Panc1 (cell line): ENCODE measurements at regions of chr5 and their contacts with region 1.

Region 1: DNA sequence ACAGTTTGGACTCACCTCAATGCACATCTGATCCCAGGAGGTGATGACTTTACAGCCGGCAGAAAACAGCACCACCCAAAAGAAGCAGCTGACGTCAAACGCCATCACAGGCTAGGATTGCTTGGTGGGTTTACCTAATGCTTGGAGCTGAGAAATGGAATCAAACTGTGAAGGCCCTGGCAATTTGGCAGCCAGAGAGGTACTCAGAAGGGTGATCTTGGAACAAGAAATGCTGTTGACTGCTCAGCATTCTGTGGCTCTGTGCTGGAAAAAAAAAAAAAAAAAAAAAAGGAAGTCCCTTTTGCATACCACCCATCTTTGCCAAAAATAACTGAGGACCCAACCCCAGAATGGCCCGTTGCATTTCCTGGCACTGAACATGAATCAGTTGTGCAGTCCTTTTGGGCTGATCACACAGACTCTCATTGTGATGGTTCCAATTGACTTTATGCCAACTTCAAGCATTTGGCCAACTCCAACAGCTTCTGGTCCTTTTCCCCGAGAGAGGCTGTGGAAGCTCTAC is at the start of gene CD180:
- DNase-seq: no peak
- ATAC-seq: no peak
- H3K4me3 ChIP-seq: no peak within 1 kb of the TSS
- H3K27ac ChIP-seq: no peak within 1 kb of the TSS
- H3K4me1 ChIP-seq: no peaks in the 10 kb centered on the region
- H3K27me3 ChIP-seq: no peaks in the 10 kb centered on the region
- CTCF ChIP-seq: no peak
- total RNA-seq, gene CD180: not detected

Region 2: GRCh38 chr5:67287510-67288268 is 91.1 kb after region 1 on chr5:
- CTCF ChIA-PET with region 1: no interaction called
- POLR2A ChIA-PET with region 1: no interaction called
- in situ Hi-C with region 1: no loop called
- intact Hi-C with region 1: no loop called
- DNase-seq: no peak
- ATAC-seq: no peak
- H3K4me3 ChIP-seq: no peak overlapping the region
- H3K27ac ChIP-seq: no peak overlapping the region
- H3K4me1 ChIP-seq: no peaks in the 10 kb centered on the region
- H3K27me3 ChIP-seq: no peaks in the 10 kb centered on the region
- CTCF ChIP-seq: no peak

Region 3: GRCh38 chr5:69074664-69075521 is 1878.3 kb after region 1 on chr5:
- CTCF ChIA-PET with region 1: interaction called, 11 read pairs
- POLR2A ChIA-PET with region 1: no interaction called
- in situ Hi-C with region 1: no loop called
- intact Hi-C with region 1: no loop called
- DNase-seq: no peak
- ATAC-seq: peak; percentile 56
- H3K4me3 ChIP-seq: no peak overlapping the region
- H3K27ac ChIP-seq: no peak overlapping the region
- H3K4me1 ChIP-seq: no peaks in the 10 kb centered on the region
- H3K27me3 ChIP-seq: no peaks in the 10 kb centered on the region
- CTCF ChIP-seq: no peak